ENCODE measurements at regions of chr17 and their contacts with region 1.

Region 1: DNA sequence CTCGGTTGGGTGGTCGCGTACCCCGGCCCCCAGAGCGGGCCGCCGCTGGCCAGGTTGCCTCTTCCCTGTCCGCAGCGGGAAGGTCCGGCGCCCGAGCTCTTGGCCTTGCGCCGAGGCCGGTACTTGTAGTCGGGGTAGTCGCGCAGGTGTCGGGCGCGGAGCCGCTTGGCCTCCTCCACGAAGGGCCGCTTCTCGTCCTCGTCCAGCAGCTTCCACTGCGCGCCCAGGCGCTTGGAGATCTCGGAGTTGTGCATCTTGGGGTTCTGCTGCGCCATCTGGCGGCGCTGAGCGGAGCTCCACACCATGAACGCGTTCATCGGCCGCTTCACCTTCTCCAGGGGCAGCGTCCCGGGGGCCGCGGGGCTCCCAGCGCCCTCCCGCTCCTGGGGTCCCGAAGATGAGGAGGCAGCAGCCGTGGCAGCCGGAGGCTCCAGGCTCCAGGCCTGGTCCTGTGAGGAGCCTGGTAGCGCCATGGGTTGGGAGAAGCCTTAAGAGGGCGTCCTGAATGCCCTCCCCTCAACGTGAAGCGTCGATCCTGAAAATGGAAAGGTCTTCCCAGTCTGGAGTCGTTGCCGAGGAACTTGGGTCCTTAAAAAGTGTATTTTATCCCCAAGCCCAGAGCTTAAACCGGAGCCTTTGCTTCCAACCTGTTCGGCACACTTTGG is 558 bp downstream of the SOX15 start:
- DNase-seq: peak; percentile 57 to 65 (median 60)
- H3K4me3 ChIP-seq: no peak overlapping the region
- H3K4me3 Mint-ChIP-seq: no peak overlapping the region
- H3K27ac ChIP-seq: no peak overlapping the region
- H3K27ac Mint-ChIP-seq: no peak overlapping the region
- H3K4me1 ChIP-seq: peaks cover 24% of the 10 kb centered on the region
- H3K4me1 Mint-ChIP-seq: peaks cover 5 to 22% (median 11%) of the 10 kb centered on the region in 4 donors
- H3K27me3 ChIP-seq: no peaks in the 10 kb centered on the region
- H3K27me3 Mint-ChIP-seq: no peaks in the 10 kb centered on the region

Region 2: GRCh38 chr17:7515911-7516610 is 73.3 kb before region 1 on chr17:
- CTCF ChIA-PET with region 1: interaction called, 28 read pairs
- POLR2A ChIA-PET with region 1: interaction called, 4 read pairs
- intact Hi-C with region 1: loop called (anchors 1 kb)
- DNase-seq: no peak
- H3K4me3 ChIP-seq: no peak overlapping the region
- H3K4me3 Mint-ChIP-seq: no peak overlapping the region
- H3K27ac ChIP-seq: no peak overlapping the region
- H3K27ac Mint-ChIP-seq: peak overlapping the region in 4 of 7 donors; percentile 17 to 74 (median 50)
- H3K4me1 ChIP-seq: no peaks in the 10 kb centered on the region
- H3K4me1 Mint-ChIP-seq: peaks cover 0 to 2% (median 0%) of the 10 kb centered on the region in 4 donors
- H3K27me3 ChIP-seq: no peaks in the 10 kb centered on the region
- H3K27me3 Mint-ChIP-seq: no peaks in the 10 kb centered on the region

Region 3: GRCh38 chr17:7523033-7523432 is 66.3 kb before region 1 on chr17:
- CTCF ChIA-PET with region 1: interaction called, 10 read pairs
- POLR2A ChIA-PET with region 1: interaction called, 3 read pairs
- intact Hi-C with region 1: no loop called
- DNase-seq: peak; percentile 43 to 60 (median 54)
- H3K4me3 ChIP-seq: no peak overlapping the region
- H3K4me3 Mint-ChIP-seq: peak overlapping the region in 1 of 8 donors; percentile 49
- H3K27ac ChIP-seq: no peak overlapping the region
- H3K27ac Mint-ChIP-seq: peak overlapping the region in 3 of 7 donors; percentile 17 to 57 (median 45)
- H3K4me1 ChIP-seq: peaks cover 4% of the 10 kb centered on the region
- H3K4me1 Mint-ChIP-seq: peaks cover 3 to 6% (median 4%) of the 10 kb centered on the region in 4 donors
- H3K27me3 ChIP-seq: no peaks in the 10 kb centered on the region
- H3K27me3 Mint-ChIP-seq: no peaks in the 10 kb centered on the region

Region 4: DNA sequence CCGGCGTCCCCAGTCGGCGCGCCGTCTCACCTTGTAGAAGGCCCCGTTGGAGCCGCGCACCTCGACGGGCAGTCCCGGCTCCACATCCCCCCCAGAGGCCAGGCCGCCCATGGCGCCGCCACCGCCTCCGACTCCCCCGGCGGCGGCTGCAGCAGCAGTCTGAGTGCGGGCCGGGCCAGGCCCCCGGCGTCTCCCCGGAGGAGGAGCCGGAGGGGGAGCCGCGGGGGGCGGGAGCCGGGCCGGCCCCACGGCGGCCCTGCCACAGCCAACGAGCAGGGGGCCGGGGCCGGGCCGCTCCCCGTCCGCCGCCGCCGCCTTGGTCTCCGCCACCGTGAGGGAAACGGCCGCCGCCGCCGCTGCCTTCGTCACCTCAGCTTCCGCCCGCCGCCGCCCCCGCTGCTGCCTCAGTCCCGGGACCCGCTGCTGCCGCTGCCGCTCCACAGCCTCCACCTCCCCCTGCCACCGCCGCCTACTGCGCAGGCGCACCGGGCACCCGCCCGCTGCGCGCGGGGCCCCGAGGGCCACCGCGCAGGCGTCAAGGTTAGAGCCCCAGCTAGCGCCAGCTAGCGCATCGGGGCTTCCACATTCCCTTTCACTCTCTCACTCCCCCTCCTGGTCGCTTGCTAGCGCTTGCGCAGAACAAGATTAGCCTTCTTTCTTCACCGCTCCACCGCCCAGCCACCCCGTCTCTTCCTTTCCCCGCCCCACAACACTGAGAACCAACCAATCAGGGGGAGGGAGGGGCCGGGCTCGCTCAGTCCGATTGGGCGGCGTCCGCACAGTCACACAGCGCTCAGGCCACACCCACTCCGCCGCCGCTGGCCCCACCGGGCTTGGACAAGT is 25.3 kb after region 1 on chr17 and contains the start of gene FXR2:
- CTCF ChIA-PET with region 1: interaction called, 10 read pairs
- POLR2A ChIA-PET with region 1: interaction called, 24 read pairs
- intact Hi-C with region 1: loop called (anchors 1 kb)
- DNase-seq: peak; percentile 98 to 100 (median 99)
- H3K4me3 ChIP-seq: peak within 1 kb of the TSS; percentile 74 to 78
- H3K4me3 Mint-ChIP-seq: peak within 1 kb of the TSS; percentile 87 to 95 (median 93)
- H3K27ac ChIP-seq: peak within 1 kb of the TSS; percentile 66
- H3K27ac Mint-ChIP-seq: peak within 1 kb of the TSS; percentile 83 to 98 (median 97)
- H3K4me1 ChIP-seq: peaks cover 42% of the 10 kb centered on the region
- H3K4me1 Mint-ChIP-seq: peaks cover 22 to 49% (median 36%) of the 10 kb centered on the region in 4 donors
- H3K27me3 ChIP-seq: no peaks in the 10 kb centered on the region
- H3K27me3 Mint-ChIP-seq: no peaks in the 10 kb centered on the region
- total RNA-seq, gene FXR2: 44.1 to 46.6 TPM

Region 5: DNA sequence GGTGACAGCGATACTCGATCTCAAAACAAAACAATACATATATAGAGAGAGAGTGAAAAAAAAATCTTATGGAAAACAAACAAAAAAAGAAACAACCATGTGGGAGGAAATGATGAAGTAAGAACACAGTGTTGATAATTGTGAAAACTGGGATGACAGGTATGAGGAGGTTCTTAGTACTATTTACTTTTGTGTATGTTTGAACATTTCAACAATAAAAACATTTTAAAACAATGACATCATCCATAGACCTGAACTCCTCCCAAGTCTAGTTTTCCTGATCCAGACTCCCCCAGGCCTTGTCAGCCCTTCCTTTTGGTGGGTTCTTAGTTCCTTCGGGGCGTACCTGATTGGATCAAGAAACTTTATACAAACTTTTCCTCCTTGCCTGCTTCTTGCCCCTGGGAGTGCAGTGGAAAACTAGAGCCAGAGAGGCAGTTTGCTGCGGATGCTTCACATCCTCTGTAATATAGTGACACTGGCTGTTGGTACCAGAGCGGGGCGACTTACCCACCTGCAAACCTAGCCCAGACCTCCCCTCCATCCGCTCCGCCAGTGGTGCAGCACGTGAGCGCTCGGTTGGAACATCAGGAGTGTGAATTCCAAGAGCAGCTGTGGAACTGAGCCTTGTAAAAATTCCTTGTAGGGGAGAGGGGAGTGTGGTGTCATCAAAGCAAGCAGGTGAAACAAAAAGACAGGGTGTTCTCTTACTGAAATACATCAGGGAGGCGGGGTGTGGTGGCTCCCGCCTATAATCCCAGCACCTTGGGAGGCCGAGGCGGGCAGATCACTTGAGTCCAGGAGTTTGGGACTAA is 1103.8 kb after region 1 on chr17:
- CTCF ChIA-PET with region 1: no interaction called
- POLR2A ChIA-PET with region 1: no interaction called
- intact Hi-C with region 1: no loop called
- DNase-seq: no peak
- H3K4me3 ChIP-seq: no peak overlapping the region
- H3K4me3 Mint-ChIP-seq: no peak overlapping the region
- H3K27ac ChIP-seq: no peak overlapping the region
- H3K27ac Mint-ChIP-seq: no peak overlapping the region
- H3K4me1 ChIP-seq: no peaks in the 10 kb centered on the region
- H3K4me1 Mint-ChIP-seq: peaks cover 0 to 1% (median under 1%) of the 10 kb centered on the region in 4 donors
- H3K27me3 ChIP-seq: no peaks in the 10 kb centered on the region
- H3K27me3 Mint-ChIP-seq: peaks cover 6 to 14% of the 10 kb centered on the region in 2 donors